MCF 10A (cell line): ENCODE measurements at regions of chr6 and their contacts with region 1.

Region 1: GRCh38 chr6:152897799-152898399 is 84.9 kb downstream of the FBXO5 start:
- DNase-seq: peak; percentile 79
- H3K4me3 Mint-ChIP-seq: no peak overlapping the region
- H3K27ac Mint-ChIP-seq: no peak overlapping the region
- H3K4me1 Mint-ChIP-seq: no peaks in the 10 kb centered on the region
- H3K27me3 Mint-ChIP-seq: peaks cover 100% of the 10 kb centered on the region
- CTCF ChIP-seq: peak; percentile 79

Region 2: GRCh38 chr6:152595505-152595904 is 302.4 kb before region 1 on chr6:
- CTCF ChIA-PET with region 1: no interaction called
- POLR2A ChIA-PET with region 1: no interaction called
- intact Hi-C with region 1: no loop called
- DNase-seq: peak; percentile 19
- H3K4me3 Mint-ChIP-seq: no peak overlapping the region
- H3K27ac Mint-ChIP-seq: no peak overlapping the region
- H3K4me1 Mint-ChIP-seq: peaks cover 7% of the 10 kb centered on the region
- H3K27me3 Mint-ChIP-seq: no peaks in the 10 kb centered on the region
- CTCF ChIP-seq: peak; percentile 34

Region 3: GRCh38 chr6:152642989-152643388 is 254.9 kb before region 1 on chr6:
- CTCF ChIA-PET with region 1: no interaction called
- POLR2A ChIA-PET with region 1: no interaction called
- intact Hi-C with region 1: no loop called
- DNase-seq: peak; percentile 70
- H3K4me3 Mint-ChIP-seq: no peak overlapping the region
- H3K27ac Mint-ChIP-seq: no peak overlapping the region
- H3K4me1 Mint-ChIP-seq: peaks cover 2% of the 10 kb centered on the region
- H3K27me3 Mint-ChIP-seq: peaks cover 4% of the 10 kb centered on the region
- CTCF ChIP-seq: peak; percentile 72

Region 4: GRCh38 chr6:152909241-152909640 is 11.3 kb after region 1 on chr6:
- CTCF ChIA-PET with region 1: interaction called, 15 read pairs
- POLR2A ChIA-PET with region 1: interaction called, 6 read pairs
- intact Hi-C with region 1: no loop called
- DNase-seq: no peak
- H3K4me3 Mint-ChIP-seq: no peak overlapping the region
- H3K27ac Mint-ChIP-seq: no peak overlapping the region
- H3K4me1 Mint-ChIP-seq: no peaks in the 10 kb centered on the region
- H3K27me3 Mint-ChIP-seq: peaks cover 94% of the 10 kb centered on the region
- CTCF ChIP-seq: no peak

Region 5: DNA sequence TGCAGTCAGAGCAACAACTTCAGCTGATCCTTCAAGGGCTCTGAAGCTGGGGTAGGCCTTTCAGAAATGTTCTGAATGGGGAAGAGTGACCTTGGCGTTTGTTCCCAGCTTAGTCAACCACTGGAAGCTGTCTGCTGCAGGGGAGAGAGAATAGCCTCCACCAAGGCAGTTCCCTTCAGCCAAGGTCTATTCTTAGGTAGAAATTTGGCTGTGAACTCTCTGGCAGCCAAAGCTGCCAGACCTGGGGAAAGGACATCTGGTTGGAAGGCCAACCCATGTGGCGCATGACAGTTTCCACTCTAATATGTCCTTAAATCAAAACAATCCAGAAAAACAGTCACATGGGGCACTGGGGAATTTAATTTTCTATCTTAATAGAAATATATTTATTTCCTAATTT is 24.8 kb after region 1 on chr6:
- CTCF ChIA-PET with region 1: interaction called, 10 read pairs
- POLR2A ChIA-PET with region 1: no interaction called
- intact Hi-C with region 1: no loop called
- DNase-seq: no peak
- H3K4me3 Mint-ChIP-seq: no peak overlapping the region
- H3K27ac Mint-ChIP-seq: no peak overlapping the region
- H3K4me1 Mint-ChIP-seq: no peaks in the 10 kb centered on the region
- H3K27me3 Mint-ChIP-seq: peaks cover 79% of the 10 kb centered on the region
- CTCF ChIP-seq: no peak

Region 6: GRCh38 chr6:153074761-153075160 is 176.9 kb after region 1 on chr6:
- CTCF ChIA-PET with region 1: no interaction called
- POLR2A ChIA-PET with region 1: no interaction called
- intact Hi-C with region 1: no loop called
- DNase-seq: no peak
- H3K4me3 Mint-ChIP-seq: no peak overlapping the region
- H3K27ac Mint-ChIP-seq: no peak overlapping the region
- H3K4me1 Mint-ChIP-seq: no peaks in the 10 kb centered on the region
- H3K27me3 Mint-ChIP-seq: no peaks in the 10 kb centered on the region
- CTCF ChIP-seq: no peak